HepG2 (cell line): ENCODE measurements at regions of chr12 and their contacts with region 1.

Region 1: DNA sequence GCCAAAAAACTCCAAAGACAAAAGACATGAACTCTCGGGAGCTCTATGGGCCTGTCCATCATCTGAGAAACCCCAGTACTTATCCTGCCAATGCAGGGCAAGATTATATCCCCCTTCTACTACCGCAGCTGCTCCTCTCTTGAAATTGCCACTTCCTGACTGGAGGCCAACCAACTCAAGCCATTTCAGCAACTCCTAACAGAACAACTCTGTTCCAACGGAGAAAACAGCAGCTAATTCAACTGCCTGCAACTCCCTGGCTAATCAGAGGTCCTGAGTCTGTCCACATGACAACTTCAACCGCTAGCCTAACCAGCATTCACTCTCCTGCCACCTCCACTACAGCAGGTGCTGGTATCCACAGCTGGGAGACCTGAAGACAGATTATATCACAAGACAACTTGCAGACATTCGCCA is 24.1 kb downstream of the CEP83 start:
- DNase-seq: no peak
- ATAC-seq: no peak
- H3K4me3 ChIP-seq: no peak overlapping the region
- H3K27ac ChIP-seq: no peak overlapping the region
- H3K4me1 ChIP-seq: peaks cover 39% of the 10 kb centered on the region
- H3K27me3 ChIP-seq: no peaks in the 10 kb centered on the region
- CTCF ChIP-seq: no peak
- EP300 ChIP-seq: no peak
- POLR2A ChIP-seq: no peak
- RAD21 ChIP-seq: no peak

Region 2: DNA sequence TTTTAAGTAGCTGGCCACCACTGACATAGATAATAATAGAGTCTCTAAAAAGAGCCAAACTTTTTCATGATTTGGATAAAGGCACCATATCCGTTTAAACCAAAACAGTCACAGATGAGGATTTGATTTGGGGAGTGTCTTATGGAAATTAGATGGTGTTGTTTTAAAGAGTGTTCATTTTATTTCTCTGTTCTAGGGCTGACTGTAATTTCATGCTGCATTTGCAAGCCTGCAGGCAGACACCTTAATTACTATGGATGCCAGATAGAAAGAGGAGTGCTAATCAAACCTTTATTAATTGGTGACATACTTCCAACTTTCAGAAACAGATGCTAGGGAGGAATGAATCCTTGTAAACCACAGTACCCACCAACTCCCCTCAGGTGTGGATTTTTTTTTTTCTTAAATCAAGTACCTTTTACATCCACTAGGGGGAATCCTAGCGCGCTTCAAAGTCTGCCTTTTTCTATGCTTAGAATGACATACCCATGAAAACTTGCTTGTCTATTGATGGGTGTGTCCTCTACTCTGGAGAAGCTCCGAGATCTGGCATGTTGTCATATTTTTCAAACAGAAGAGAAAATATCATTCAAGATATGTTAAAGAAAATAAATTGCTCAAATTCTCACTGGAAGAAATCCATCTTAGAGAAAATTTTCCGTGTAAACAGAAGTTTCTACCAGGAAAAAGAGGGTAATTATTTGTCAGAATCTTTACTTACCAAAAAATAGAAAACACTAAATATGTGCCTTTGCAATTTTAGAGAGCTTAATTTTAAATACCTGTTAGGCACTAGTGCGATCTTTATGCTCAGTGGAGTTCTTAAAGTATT is 301.3 kb before region 1 on chr12:
- CTCF ChIA-PET with region 1: interaction called, 5 read pairs
- POLR2A ChIA-PET with region 1: no interaction called
- in situ Hi-C with region 1: no loop called
- intact Hi-C with region 1: loop called (anchors 1 kb)
- DNase-seq: peak; percentile 47
- ATAC-seq: peak; percentile 72
- H3K4me3 ChIP-seq: no peak overlapping the region
- H3K27ac ChIP-seq: no peak overlapping the region
- H3K4me1 ChIP-seq: peaks cover 6% of the 10 kb centered on the region; the same call in 1 of the 2 replicates
- H3K27me3 ChIP-seq: peaks cover 0 to under 1% of the 10 kb centered on the region in 2 experiments; a peak in 2 of 5 replicates
- CTCF ChIP-seq: peak; percentile 64
- EP300 ChIP-seq: no peak
- POLR2A ChIP-seq: no peak
- RAD21 ChIP-seq: peak; percentile 47; the same call in 1 of the 2 replicates

Region 3: GRCh38 chr12:94326727-94327126 is 108.8 kb before region 1 on chr12:
- CTCF ChIA-PET with region 1: no interaction called
- POLR2A ChIA-PET with region 1: no interaction called
- in situ Hi-C with region 1: no loop called
- intact Hi-C with region 1: loop called (anchors 10 kb)
- DNase-seq: no peak
- ATAC-seq: no peak
- H3K4me3 ChIP-seq: no peak overlapping the region
- H3K27ac ChIP-seq: no peak overlapping the region
- H3K4me1 ChIP-seq: no peaks in the 10 kb centered on the region
- H3K27me3 ChIP-seq: no peaks in the 10 kb centered on the region
- CTCF ChIP-seq: no peak
- EP300 ChIP-seq: no peak
- POLR2A ChIP-seq: no peak
- RAD21 ChIP-seq: no peak

Region 4: DNA sequence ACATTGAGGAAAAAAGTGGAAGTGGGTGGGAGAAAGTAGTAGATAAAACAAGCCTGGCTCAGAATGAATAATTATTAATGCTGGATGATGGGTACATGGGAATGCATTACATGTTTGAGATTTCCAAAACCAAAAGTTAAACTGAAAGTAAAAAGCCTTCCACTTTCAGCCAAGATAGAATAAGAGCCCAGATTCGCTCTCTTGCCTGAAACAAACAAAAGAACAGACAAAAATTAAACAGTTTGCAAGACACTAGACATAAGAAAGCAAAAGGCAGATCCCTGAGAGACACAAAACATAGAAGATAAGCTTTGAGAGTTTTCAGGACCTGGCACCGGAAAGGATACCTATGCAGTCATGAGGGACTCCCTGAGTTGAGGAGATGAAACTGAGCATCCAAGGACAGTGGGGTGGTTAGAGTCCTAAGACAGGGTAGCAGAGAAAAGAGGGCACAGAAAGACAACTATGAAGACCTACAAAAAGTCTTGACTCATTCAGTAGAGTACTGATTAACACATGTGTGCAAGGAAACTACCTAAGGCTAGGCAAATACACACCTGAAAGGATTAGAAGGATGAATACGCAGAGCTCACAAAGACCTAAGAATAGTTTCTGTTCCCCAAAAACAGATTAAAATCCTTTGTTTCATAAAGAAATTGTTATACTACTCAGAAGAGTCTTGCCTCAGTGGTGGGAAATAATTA is 30.0 kb before region 1 on chr12:
- CTCF ChIA-PET with region 1: no interaction called
- POLR2A ChIA-PET with region 1: no interaction called
- in situ Hi-C with region 1: no loop called
- intact Hi-C with region 1: no loop called
- DNase-seq: no peak
- ATAC-seq: no peak
- H3K4me3 ChIP-seq: no peak overlapping the region
- H3K27ac ChIP-seq: no peak overlapping the region
- H3K4me1 ChIP-seq: no peaks in the 10 kb centered on the region
- H3K27me3 ChIP-seq: no peaks in the 10 kb centered on the region
- CTCF ChIP-seq: no peak
- EP300 ChIP-seq: no peak
- POLR2A ChIP-seq: no peak
- RAD21 ChIP-seq: no peak

Region 5: GRCh38 chr12:94416613-94417012 is 18.9 kb before region 1 on chr12:
- CTCF ChIA-PET with region 1: no interaction called
- POLR2A ChIA-PET with region 1: no interaction called
- in situ Hi-C with region 1: no loop called
- intact Hi-C with region 1: no loop called
- DNase-seq: no peak
- ATAC-seq: no peak
- H3K4me3 ChIP-seq: no peak overlapping the region
- H3K27ac ChIP-seq: no peak overlapping the region
- H3K4me1 ChIP-seq: 0 out of 2 replicates have a peak, but pooled peaks cover 14% of the 10 kb centered on the region
- H3K27me3 ChIP-seq: no peaks in the 10 kb centered on the region
- CTCF ChIP-seq: no peak
- EP300 ChIP-seq: no peak
- POLR2A ChIP-seq: no peak
- RAD21 ChIP-seq: no peak

Region 6: DNA sequence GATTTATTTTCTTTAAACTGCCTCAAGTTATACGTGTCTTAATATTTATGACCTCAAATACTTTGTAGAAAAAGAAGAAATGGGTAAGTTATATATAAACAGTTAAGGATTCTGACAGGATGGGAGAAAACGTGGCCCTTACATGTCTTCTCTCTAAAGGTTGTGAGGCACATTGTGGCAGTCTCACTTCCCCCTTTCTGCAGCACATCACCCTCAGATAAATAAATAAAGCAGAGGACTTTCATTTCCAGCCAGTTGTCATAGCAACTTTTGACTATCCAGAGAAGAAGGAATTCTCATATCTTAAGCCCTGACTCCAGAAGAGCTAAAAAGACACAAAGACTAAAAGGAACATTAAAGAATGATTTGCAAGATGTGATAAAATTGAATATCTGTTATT is 52.9 kb after region 1 on chr12:
- CTCF ChIA-PET with region 1: no interaction called
- POLR2A ChIA-PET with region 1: no interaction called
- in situ Hi-C with region 1: no loop called
- intact Hi-C with region 1: no loop called
- DNase-seq: no peak
- ATAC-seq: no peak
- H3K4me3 ChIP-seq: no peak overlapping the region
- H3K27ac ChIP-seq: no peak overlapping the region
- H3K4me1 ChIP-seq: no peaks in the 10 kb centered on the region
- H3K27me3 ChIP-seq: no peaks in the 10 kb centered on the region
- CTCF ChIP-seq: no peak
- EP300 ChIP-seq: no peak
- POLR2A ChIP-seq: no peak
- RAD21 ChIP-seq: no peak

Region 7: GRCh38 chr12:94545935-94546771 is 110.6 kb after region 1 on chr12:
- CTCF ChIA-PET with region 1: no interaction called
- POLR2A ChIA-PET with region 1: no interaction called
- in situ Hi-C with region 1: no loop called
- intact Hi-C with region 1: no loop called
- DNase-seq: peak; percentile 44
- ATAC-seq: peak; percentile 97
- H3K4me3 ChIP-seq: no peak overlapping the region
- H3K27ac ChIP-seq: no peak overlapping the region
- H3K4me1 ChIP-seq: no peaks in the 10 kb centered on the region
- H3K27me3 ChIP-seq: peaks cover 0 to 2% of the 10 kb centered on the region in 2 experiments; a peak in 1 of 5 replicates
- CTCF ChIP-seq: peak; percentile 73
- EP300 ChIP-seq: no peak
- POLR2A ChIP-seq: no peak
- RAD21 ChIP-seq: peak; percentile 82